ENCODE measurements at regions of chr10 and their contacts with region 1.

Region 1: DNA sequence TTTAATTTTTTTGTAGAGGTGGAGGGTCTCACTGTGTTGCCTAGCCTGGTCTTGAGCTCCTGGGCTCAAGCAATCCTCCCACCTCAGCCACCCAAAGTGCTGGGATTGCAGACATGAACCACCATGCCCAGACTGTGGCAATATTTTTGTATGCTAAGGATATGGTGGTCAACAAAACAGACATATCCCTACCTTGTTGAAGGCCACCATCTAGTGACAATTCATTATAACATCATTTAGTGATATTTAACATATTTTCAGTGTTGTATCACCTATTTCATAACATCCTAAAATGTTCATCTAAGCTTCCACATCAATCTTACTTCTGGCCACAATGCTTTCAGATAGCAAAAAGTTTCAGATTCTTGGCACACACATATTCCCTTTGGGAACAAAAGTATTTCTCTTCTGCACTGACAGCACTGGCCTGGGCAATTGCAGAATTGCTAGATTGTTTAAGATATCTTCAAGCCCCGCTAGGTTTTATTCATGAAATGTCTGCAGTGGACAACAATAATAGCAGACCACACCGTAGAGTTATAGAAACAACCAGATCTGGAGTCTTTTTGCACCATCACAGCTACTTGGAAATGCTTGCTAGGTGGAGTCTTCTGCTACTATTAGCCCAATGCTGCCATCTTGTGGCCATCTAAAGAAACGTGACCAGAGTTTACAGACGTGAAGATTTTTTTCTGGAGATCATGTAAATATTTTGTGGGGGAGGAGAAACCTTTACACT is 58.4 kb downstream of the DNAJC12 start:
- DNase-seq: peak; percentile 81
- ATAC-seq: peak; percentile 74
- H3K4me3 Mint-ChIP-seq: no peak overlapping the region
- H3K27ac Mint-ChIP-seq: no peak overlapping the region
- H3K4me1 Mint-ChIP-seq: peaks cover 51% of the 10 kb centered on the region
- H3K27me3 Mint-ChIP-seq: no peaks in the 10 kb centered on the region

Region 2: DNA sequence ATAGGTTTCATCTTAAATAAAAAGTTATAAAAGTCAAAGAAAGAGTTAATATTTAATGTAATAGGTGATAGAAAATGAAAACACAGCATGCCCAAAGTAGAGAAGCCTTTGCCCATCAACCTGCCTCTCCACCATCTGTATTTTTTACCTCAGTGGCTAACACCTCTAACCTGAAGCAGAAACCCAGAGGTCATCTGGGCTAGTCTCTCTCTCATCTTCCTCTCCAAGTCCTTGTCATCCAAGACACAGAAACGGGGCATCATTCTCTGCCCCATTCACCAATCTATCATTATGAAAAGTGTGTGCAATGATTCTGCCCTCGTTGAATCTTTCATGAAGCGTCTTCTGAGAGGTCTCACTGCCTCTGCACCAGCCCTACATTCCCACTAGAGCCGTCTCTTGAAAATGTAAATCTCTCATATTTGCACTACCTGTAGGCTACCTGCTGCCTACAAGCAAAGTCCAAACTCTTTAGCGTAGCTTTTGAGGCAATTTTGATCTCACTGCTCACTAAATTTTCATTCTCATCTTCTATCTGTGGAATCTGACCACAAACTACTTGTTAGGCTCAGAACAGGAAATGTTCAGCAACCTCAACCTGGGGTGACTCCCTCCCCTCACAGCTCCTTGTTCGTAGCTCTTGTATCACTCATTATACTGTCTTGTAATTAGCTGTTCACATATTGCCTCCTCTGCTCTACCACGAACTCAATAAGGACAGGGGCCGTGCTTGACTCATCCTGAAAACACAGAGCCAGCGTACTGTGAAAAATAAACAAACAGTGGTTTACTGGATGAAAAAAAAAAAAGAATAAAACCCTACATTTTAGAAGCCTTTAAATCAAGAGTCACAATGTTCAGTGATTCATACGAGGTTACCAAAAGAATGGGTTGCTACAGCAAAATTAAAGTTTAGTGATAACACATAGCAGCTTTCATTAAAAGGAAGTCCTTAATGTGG is 166.8 kb before region 1 on chr10:
- CTCF ChIA-PET with region 1: interaction called, 11 read pairs
- DNase-seq: peak; percentile 92
- ATAC-seq: peak; percentile 100
- H3K4me3 Mint-ChIP-seq: peak overlapping the region; percentile 58
- H3K27ac Mint-ChIP-seq: peak overlapping the region; percentile 85
- H3K4me1 Mint-ChIP-seq: peaks cover 28% of the 10 kb centered on the region
- H3K27me3 Mint-ChIP-seq: peaks cover 32% of the 10 kb centered on the region

Region 3: DNA sequence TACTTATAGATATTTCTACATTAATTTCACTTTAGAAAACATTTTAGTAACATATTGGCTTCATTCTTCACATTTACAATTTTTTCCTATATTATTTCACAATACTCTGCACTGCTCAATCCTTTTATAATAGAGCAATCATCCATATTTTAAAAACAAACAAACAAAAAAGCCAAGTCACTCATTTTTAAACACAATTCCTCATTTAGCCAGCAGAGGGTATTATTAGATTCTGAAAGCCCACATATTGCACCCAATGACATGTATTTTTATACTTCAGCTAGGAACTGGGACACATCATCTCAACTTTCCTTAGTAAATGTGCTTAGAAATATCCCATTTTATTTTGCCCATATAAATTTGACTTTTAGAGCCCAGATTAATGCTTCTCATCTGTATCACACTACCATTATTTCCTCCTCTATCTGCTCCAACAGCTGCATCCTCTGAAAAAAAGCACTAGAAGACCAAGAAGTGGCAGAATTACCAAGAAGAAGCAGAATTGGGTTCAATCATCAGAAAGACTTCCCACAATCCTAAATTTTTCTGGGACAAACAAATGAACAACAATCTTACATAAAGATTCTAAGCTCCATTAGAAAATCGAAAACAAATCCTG is 113.1 kb before region 1 on chr10:
- CTCF ChIA-PET with region 1: interaction called, 43 read pairs
- DNase-seq: no peak
- ATAC-seq: no peak
- H3K4me3 Mint-ChIP-seq: no peak overlapping the region
- H3K27ac Mint-ChIP-seq: no peak overlapping the region
- H3K4me1 Mint-ChIP-seq: no peaks in the 10 kb centered on the region
- H3K27me3 Mint-ChIP-seq: peaks cover 14% of the 10 kb centered on the region

Region 4: DNA sequence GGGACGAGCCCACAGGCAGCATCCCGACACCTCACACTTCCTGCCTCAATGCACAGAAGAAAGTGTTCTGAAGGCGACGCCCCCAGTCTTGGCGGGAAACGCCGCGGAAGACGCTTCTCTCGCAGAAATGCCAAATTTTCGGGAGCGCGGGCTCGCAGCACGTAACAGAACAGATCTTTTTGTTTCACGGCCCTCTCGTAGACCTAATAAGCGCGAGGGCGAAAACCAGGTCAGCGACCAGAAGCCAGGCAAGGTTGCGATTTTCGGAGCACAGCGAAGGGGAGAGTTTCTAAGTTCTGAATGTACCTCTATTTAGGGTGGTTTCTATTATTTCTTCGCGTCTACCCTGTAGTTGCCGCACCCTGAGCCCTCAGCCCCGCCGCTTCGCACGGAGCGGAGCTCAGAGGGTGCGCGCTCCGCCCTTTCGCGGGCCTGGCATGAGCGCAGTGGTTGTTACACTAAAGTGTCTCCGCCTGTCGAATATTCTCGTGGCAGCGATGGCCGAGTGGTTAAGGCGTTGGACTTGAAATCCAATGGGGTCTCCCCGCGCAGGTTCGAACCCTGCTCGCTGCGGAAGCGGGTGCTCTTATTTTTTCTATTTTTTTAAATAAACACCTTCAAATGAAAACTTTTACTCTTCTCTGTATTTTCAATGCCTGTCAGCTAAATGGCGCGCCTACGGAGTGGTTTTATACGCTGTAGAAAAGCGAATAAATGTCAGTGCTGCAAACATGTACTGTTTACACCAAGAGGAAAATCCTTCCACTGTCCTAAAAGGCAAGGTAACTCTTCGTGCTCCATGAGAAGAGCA is 15.4 kb before region 1 on chr10:
- CTCF ChIA-PET with region 1: interaction called, 18 read pairs
- DNase-seq: peak; percentile 97
- ATAC-seq: peak; percentile 85
- H3K4me3 Mint-ChIP-seq: peak overlapping the region; percentile 92
- H3K27ac Mint-ChIP-seq: peak overlapping the region; percentile 98
- H3K4me1 Mint-ChIP-seq: peaks cover 21% of the 10 kb centered on the region
- H3K27me3 Mint-ChIP-seq: peaks cover 3% of the 10 kb centered on the region

Measured in activated CD8-positive, alpha-beta memory T cell treated with anti-CD3 and anti-CD28 coated beads, Interleukin-2, amount 10 ng/mL, durations not matched to agents 7 days and 5 days (primary cell).